ENCODE measurements at regions of chr6 and their contacts with region 1.

Region 1: GRCh38 chr6:111011360-111012142 is 29.7 kb downstream of the RPF2 start:
- DNase-seq: no peak
- H3K4me3 Mint-ChIP-seq: no peak overlapping the region
- H3K27ac Mint-ChIP-seq: peak overlapping the region; percentile 7
- H3K4me1 Mint-ChIP-seq: peaks cover 4% of the 10 kb centered on the region
- H3K27me3 Mint-ChIP-seq: no peaks in the 10 kb centered on the region

Region 2: DNA sequence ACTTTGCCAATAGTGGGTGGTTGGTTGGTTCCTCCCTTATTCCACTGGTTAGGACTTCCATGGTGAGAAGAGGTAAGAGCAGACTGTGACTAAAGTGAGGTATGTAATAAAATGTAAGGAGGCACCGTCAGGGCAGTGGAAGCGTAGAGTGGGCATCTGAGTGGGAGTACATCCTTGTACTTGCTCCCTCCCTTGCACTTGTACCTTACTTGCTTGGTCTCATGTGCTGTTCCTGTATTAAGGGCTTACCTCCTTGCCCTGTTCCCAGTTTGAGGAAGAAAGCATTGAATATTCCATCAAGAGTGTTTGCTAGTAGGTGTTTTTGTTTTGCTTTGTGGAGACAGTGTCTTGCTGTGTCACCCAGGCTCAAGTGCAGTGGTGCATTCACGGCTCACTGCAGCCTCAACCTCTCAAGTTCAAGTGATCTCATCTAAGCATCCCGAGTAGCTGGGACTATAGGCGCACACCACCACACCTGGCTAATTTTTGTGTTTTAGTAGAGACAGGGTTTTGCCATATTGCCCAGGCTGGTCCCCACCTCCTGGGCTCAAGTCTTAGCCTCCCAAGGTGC is 111.4 kb before region 1 on chr6:
- CTCF ChIA-PET with region 1: no interaction called
- POLR2A ChIA-PET with region 1: no interaction called
- DNase-seq: no peak
- H3K4me3 Mint-ChIP-seq: no peak overlapping the region
- H3K27ac Mint-ChIP-seq: no peak overlapping the region
- H3K4me1 Mint-ChIP-seq: no peaks in the 10 kb centered on the region
- H3K27me3 Mint-ChIP-seq: no peaks in the 10 kb centered on the region

Region 3: DNA sequence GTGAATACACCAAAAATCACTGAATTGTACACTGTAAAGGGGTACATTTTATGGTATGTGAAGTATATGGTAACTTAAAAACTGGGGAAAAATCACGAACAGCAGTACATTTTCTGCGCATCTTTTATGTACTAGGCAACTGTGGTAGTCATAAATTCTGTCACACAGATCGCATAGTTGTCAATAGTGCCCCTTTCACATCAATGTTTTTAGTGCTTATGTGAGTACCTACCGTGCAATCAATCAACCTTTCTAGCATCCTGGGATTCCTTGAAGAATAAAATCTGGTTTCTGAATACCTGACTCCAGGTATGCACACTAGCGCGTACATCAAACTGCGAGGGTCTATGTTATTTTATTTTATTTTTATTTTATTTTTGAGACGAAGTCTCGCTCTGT is 30.4 kb before region 1 on chr6:
- CTCF ChIA-PET with region 1: interaction called, 11 read pairs
- POLR2A ChIA-PET with region 1: interaction called, 3 read pairs
- DNase-seq: no peak
- H3K4me3 Mint-ChIP-seq: peak overlapping the region; percentile 99
- H3K27ac Mint-ChIP-seq: peak overlapping the region; percentile 97
- H3K4me1 Mint-ChIP-seq: peaks cover 54% of the 10 kb centered on the region
- H3K27me3 Mint-ChIP-seq: no peaks in the 10 kb centered on the region

Region 4: DNA sequence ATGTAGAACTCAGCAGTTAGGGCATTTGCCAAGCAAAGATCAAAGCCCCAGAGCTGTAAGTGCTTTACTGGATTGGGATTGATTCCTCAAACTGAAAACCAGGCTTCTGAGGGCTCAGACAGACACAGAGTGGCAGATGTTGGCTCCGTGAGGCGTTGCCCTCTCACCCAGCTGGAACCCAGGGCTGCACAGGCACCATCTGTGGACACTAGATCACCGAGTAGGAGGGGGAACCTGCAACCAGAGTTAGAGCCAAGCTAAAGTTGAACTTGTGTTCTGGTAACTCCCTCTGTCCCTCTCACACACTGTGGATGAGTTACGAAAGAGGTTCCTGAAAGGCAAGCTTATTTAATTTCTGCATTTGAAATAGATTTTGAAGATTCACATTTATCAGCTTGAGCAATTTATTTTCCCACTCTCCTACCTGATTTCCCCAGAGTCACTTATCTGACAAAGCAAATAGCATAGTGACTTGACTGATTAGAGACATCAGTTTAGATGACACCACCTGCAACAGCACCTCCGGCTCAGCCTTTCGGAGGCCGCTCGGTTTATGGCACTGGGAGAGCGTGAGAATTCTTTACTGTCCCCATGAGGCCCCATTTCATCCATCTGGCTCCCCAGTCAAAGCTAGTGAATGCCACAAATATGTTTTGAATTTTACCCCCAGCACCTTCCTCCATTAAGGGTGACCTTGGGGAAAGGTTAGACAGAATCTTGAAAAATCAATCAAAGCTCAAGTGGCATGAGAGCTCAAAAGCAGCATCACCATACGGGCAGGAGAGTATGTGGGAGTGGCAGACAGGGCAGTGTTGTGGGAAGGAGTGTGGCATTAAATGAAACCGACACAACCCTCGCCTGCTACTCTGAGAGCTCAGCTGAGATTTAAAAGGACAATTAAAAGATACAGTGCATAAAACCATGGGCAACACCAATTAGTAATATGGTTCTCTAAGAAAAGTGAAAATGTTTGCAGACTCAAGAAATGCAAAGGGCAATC is 18.8 kb after region 1 on chr6:
- CTCF ChIA-PET with region 1: interaction called, 10 read pairs
- POLR2A ChIA-PET with region 1: interaction called, 3 read pairs
- DNase-seq: no peak
- H3K4me3 Mint-ChIP-seq: no peak overlapping the region
- H3K27ac Mint-ChIP-seq: no peak overlapping the region
- H3K4me1 Mint-ChIP-seq: peaks cover 4% of the 10 kb centered on the region
- H3K27me3 Mint-ChIP-seq: no peaks in the 10 kb centered on the region

Region 5: GRCh38 chr6:111210194-111210728 is 198.7 kb after region 1 on chr6:
- CTCF ChIA-PET with region 1: interaction called, 23 read pairs
- POLR2A ChIA-PET with region 1: no interaction called
- DNase-seq: peak; percentile 20
- H3K4me3 Mint-ChIP-seq: no peak overlapping the region
- H3K27ac Mint-ChIP-seq: no peak overlapping the region
- H3K4me1 Mint-ChIP-seq: no peaks in the 10 kb centered on the region
- H3K27me3 Mint-ChIP-seq: no peaks in the 10 kb centered on the region

Measured in activated CD4-positive, alpha-beta memory T cell treated with anti-CD3 and anti-CD28 coated beads, Interleukin-2, amount 10 ng/mL, durations not matched to agents 7 days and 5 days (primary cell).